ENCODE measurements at regions of chr19 and their contacts with region 1.

Region 1: GRCh38 chr19:11242864-11243797 is 3.7 kb downstream of the ANGPTL8 start:
- DNase-seq: no peak
- H3K4me3 ChIP-seq: no peak overlapping the region
- H3K27me3 ChIP-seq: no peaks in the 10 kb centered on the region
- CTCF ChIP-seq: peak; percentile 88

Region 2: DNA sequence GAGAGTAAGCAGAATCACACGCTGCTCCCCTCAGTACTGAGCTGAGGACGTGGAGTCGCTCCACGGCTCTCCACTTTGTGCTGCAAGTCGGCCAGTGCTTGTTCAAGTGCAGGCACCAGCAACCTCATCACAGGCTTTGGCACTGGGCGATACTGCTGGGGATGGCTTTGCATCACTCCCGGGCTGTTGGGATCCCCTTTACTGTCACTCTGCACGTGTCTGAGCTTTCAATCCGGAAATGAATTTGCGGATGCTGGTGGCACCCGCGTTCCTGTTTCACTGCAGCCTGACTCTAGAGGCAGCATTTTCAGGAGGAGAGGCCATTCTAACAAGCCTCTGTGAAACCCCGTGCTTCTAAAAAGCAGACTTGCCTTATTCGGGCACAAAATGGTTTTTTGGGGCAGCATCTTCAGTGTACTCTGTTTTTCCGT is 263.2 kb before region 1 on chr19:
- CTCF ChIA-PET with region 1: no interaction called
- POLR2A ChIA-PET with region 1: no interaction called
- DNase-seq: no peak
- H3K4me3 ChIP-seq: no peak overlapping the region
- H3K27me3 ChIP-seq: no peaks in the 10 kb centered on the region
- CTCF ChIP-seq: no peak

Region 3: DNA sequence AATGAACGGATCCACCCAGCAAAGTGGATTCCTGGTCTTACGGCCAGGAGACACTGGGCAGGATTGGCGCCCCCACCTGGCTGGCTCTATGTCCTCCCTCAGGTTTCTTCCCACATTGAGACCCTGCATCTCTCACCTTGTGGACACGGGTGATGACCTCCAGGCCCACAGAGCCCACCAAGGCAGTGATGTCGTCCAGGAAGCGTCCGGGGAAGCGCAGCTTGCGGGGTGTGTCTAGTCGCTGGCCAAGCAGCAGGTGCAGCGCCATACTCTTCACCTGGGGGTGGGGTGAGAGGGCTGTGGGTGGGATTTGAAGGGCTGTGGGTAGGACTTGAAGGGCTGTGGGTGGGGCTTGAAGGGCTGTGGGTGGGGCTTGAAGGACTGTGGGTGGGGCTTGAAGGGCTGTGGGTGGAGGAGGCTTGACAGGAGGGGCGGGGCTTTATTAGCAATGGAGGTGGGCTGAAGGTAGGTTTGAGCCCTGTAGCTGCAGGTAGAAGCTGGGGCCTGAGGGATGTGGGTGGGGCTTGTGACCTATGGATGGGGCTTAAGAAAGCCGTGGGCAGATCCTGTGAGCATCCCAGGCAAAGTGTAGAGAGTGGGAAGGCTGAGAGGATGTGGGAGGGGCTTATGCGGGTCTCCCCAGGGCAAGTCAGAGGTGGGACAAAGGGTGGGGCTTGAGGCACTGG is 15.8 kb before region 1 on chr19:
- CTCF ChIA-PET with region 1: interaction called, 20 read pairs
- POLR2A ChIA-PET with region 1: no interaction called
- DNase-seq: no peak
- H3K4me3 ChIP-seq: no peak overlapping the region
- H3K27me3 ChIP-seq: no peaks in the 10 kb centered on the region
- CTCF ChIP-seq: peak; percentile 23

Region 4: GRCh38 chr19:11256189-11256588 is 13.1 kb after region 1 on chr19:
- CTCF ChIA-PET with region 1: interaction called, 26 read pairs
- POLR2A ChIA-PET with region 1: interaction called, 3 read pairs
- DNase-seq: no peak
- H3K4me3 ChIP-seq: no peak overlapping the region
- H3K27me3 ChIP-seq: no peaks in the 10 kb centered on the region
- CTCF ChIP-seq: no peak

Region 5: GRCh38 chr19:11261941-11262839 is 19.1 kb after region 1 on chr19 and contains the start of gene DOCK6:
- CTCF ChIA-PET with region 1: interaction called, 15 read pairs
- POLR2A ChIA-PET with region 1: interaction called, 3 read pairs
- DNase-seq: no peak
- H3K4me3 ChIP-seq: peak within 1 kb of the TSS; percentile 87
- H3K27me3 ChIP-seq: no peaks in the 10 kb centered on the region
- CTCF ChIP-seq: peak; percentile 69
- polyA plus RNA-seq, gene DOCK6: 9.1 and 15.2 TPM in 2 replicates

Region 6: GRCh38 chr19:11324079-11324661 is 81.0 kb after region 1 on chr19:
- CTCF ChIA-PET with region 1: no interaction called
- POLR2A ChIA-PET with region 1: no interaction called
- DNase-seq: peak; percentile 92
- H3K4me3 ChIP-seq: no peak overlapping the region
- H3K27me3 ChIP-seq: no peaks in the 10 kb centered on the region
- CTCF ChIP-seq: no peak